ENCODE measurements at regions of chr18 and their contacts with region 1.

Region 1: DNA sequence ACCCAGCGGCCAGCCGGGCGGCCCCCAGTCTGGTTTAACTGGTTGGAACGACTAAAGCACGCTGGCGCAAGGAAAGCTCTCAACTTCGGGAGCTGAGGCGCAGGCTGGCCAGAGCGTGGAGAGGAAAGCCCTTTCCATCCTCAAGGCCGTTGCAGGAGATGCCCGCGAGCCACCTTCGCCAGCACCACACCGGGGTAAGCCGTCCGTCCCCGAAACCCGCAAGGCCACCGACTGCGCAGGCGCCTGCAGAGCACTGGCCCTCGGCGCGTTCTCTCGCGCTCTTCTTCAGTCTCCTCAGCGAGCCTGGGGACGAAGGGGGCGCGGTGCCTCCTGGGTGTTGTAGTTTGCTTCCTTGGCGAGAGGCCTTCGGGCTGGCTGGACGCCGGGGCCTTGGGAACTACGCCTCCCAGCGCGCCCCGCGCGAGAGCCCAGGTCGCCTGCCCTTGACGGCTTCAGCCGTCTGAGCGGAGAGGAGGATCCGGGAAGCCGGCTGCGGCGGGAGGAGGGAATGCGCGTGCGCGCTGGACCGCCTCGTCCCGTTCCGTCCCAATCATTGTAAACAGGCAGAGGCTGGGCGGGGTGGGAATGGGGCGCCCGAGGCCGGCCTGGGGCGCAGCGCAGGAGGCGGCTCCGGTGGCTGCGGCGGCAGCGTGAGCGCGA is at the start of gene RALBP1:
- DNase-seq: peak; percentile 99
- H3K4me3 Mint-ChIP-seq: peak within 1 kb of the TSS; percentile 92
- H3K27ac Mint-ChIP-seq: peak within 1 kb of the TSS; percentile 97
- H3K4me1 Mint-ChIP-seq: peaks cover 29% of the 10 kb centered on the region
- H3K27me3 Mint-ChIP-seq: no peaks in the 10 kb centered on the region
- CTCF ChIP-seq: no peak
- total RNA-seq, gene RALBP1: 47.0 and 47.9 TPM in 2 replicates

Region 2: GRCh38 chr18:9321017-9321452 is 154.1 kb before region 1 on chr18:
- CTCF ChIA-PET with region 1: no interaction called
- POLR2A ChIA-PET with region 1: no interaction called
- intact Hi-C with region 1: no loop called
- DNase-seq: no peak
- H3K4me3 Mint-ChIP-seq: no peak overlapping the region
- H3K27ac Mint-ChIP-seq: no peak overlapping the region
- H3K4me1 Mint-ChIP-seq: peaks cover 19% of the 10 kb centered on the region
- H3K27me3 Mint-ChIP-seq: no peaks in the 10 kb centered on the region
- CTCF ChIP-seq: no peak

Region 3: DNA sequence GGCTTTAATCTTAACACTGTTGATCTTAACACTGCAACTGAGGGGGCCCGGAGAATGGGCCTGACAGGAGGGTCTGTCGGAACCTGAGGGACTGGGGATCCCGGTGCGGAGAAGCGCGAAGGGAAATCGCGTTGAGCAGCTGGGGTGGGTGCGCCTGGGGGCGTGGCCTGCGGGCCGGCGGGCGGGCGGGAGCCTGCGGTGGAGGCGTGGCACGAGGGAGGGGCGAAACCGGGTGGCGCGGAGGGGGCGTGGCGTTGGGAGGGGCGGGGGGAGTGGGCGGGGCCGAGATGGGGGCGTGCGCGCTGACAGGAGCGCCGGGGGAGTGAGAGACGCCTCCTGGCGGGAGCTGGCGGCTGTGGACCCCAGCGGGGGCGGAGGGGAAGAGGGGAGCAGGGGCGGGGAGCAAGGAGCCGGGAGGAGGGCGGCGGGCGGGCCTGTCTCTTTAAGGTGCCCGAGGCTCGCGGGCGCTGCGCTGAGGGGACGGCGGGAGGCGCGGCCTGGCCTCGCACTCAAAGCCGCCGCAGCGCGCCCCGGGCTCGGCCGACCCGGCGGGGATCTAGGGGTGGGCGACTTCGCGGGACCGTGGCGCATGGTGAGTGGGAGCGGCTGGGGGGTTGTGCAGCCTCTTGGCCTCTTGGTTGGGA is 140.7 kb before region 1 on chr18 and contains the start of gene TWSG1:
- CTCF ChIA-PET with region 1: no interaction called
- POLR2A ChIA-PET with region 1: interaction called, 10 read pairs
- intact Hi-C with region 1: loop called (anchors 2 kb)
- DNase-seq: peak; percentile 93
- H3K4me3 Mint-ChIP-seq: peak within 1 kb of the TSS; percentile 81
- H3K27ac Mint-ChIP-seq: peak within 1 kb of the TSS; percentile 63
- H3K4me1 Mint-ChIP-seq: peaks cover 8% of the 10 kb centered on the region
- H3K27me3 Mint-ChIP-seq: no peaks in the 10 kb centered on the region
- CTCF ChIP-seq: peak; percentile 40
- total RNA-seq, gene TWSG1: 26.0 and 31.7 TPM in 2 replicates

Region 4: DNA sequence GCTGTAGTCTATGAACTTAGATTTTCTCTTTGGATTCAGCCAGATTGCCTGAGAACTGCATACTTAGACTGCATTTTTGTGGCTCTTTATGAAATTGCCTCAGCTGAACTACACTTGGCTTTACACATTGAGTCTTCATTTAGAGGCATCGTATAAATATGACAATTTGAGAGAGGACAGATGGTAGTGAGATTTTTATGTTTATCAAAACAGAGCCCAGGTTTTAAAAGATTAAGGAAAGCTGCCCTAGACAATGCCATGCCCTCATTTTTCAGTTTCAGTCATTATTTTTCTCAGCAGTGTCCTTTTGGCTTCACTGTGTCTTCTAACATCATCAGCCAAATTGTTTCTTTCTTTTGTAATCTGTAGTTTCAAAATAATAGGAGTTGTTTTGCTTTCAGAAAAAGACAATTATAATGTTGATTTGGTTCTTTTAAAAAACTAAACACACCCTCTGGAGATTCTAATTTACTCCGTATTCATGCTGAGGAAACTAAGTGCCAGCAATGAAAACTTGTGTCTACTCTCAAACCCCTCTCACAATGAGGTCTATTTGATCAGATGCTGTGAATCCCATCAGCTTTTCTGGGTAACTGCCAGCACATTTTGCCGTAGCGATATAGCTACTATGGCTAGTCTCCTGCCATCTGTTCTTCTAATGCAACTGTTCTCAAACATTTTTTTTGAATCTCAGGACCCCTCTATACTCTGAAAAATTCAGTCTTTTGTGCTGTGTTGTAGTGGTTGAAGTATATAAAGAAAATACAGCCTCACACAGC is 94.3 kb before region 1 on chr18:
- CTCF ChIA-PET with region 1: no interaction called
- POLR2A ChIA-PET with region 1: no interaction called
- intact Hi-C with region 1: no loop called
- DNase-seq: no peak
- H3K4me3 Mint-ChIP-seq: no peak overlapping the region
- H3K27ac Mint-ChIP-seq: no peak overlapping the region
- H3K4me1 Mint-ChIP-seq: no peaks in the 10 kb centered on the region
- H3K27me3 Mint-ChIP-seq: no peaks in the 10 kb centered on the region
- CTCF ChIP-seq: no peak

Region 5: GRCh38 chr18:9453283-9453682 is 21.8 kb before region 1 on chr18:
- CTCF ChIA-PET with region 1: no interaction called
- POLR2A ChIA-PET with region 1: interaction called, 10 read pairs
- intact Hi-C with region 1: no loop called
- DNase-seq: no peak
- H3K4me3 Mint-ChIP-seq: no peak overlapping the region
- H3K27ac Mint-ChIP-seq: no peak overlapping the region
- H3K4me1 Mint-ChIP-seq: no peaks in the 10 kb centered on the region
- H3K27me3 Mint-ChIP-seq: no peaks in the 10 kb centered on the region
- CTCF ChIP-seq: no peak

Region 6: GRCh38 chr18:9488538-9488937 is 13.4 kb after region 1 on chr18:
- CTCF ChIA-PET with region 1: interaction called, 6 read pairs
- POLR2A ChIA-PET with region 1: interaction called, 12 read pairs
- intact Hi-C with region 1: no loop called
- DNase-seq: no peak
- H3K4me3 Mint-ChIP-seq: no peak overlapping the region
- H3K27ac Mint-ChIP-seq: no peak overlapping the region
- H3K4me1 Mint-ChIP-seq: peaks cover 21% of the 10 kb centered on the region
- H3K27me3 Mint-ChIP-seq: no peaks in the 10 kb centered on the region
- CTCF ChIP-seq: no peak

Region 7: DNA sequence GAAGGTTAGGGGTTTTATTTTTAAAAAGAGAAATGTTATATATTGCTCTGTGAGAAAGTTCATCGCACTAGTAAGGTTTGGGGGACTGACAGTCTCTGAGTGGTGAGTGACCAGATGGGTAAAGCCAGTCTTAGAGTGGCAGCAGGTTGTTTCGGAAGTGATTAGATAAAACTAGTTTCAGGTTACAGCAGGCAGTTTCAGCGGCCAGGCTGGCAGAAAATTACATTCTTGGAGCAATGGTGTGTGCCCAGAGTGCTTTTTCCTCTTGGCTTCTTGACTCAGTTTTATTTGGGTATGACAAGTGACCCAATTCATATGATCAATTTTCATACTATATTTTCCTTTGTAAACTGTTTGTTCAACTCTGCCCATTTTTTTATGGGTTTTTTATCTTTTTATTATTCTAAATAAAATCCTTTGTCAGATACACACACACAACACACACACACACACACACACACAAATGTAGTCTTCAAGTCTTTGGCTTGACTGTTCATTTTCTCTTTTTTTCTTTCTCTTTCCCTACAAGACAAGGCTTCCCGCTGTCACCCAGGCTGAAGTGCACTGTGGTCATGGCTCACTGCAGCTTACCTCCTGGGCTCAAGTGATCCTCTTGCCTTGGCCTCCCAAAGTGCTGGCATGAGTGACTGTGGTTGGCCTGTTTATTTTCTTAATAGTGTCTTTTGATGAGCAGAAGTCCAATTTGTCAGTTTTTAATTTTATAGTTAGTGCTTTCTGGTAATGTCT is 31.1 kb after region 1 on chr18:
- CTCF ChIA-PET with region 1: no interaction called
- POLR2A ChIA-PET with region 1: no interaction called
- intact Hi-C with region 1: no loop called
- DNase-seq: peak; percentile 49
- H3K4me3 Mint-ChIP-seq: no peak overlapping the region
- H3K27ac Mint-ChIP-seq: no peak overlapping the region
- H3K4me1 Mint-ChIP-seq: peaks cover 27% of the 10 kb centered on the region
- H3K27me3 Mint-ChIP-seq: no peaks in the 10 kb centered on the region
- CTCF ChIP-seq: no peak

Region 8: GRCh38 chr18:11215216-11215615 is 1740.1 kb after region 1 on chr18:
- CTCF ChIA-PET with region 1: no interaction called
- POLR2A ChIA-PET with region 1: no interaction called
- intact Hi-C with region 1: no loop called
- DNase-seq: no peak
- H3K4me3 Mint-ChIP-seq: no peak overlapping the region
- H3K27ac Mint-ChIP-seq: no peak overlapping the region
- H3K4me1 Mint-ChIP-seq: peaks cover under 1% of the 10 kb centered on the region
- H3K27me3 Mint-ChIP-seq: peaks cover 34% of the 10 kb centered on the region
- CTCF ChIP-seq: no peak